Activated CD4-positive, alpha-beta T cell treated with anti-CD3 and anti-CD28 coated beads for 36 hours (primary cell): ENCODE measurements at regions of chr9 and their contacts with region 1.

Region 1: DNA sequence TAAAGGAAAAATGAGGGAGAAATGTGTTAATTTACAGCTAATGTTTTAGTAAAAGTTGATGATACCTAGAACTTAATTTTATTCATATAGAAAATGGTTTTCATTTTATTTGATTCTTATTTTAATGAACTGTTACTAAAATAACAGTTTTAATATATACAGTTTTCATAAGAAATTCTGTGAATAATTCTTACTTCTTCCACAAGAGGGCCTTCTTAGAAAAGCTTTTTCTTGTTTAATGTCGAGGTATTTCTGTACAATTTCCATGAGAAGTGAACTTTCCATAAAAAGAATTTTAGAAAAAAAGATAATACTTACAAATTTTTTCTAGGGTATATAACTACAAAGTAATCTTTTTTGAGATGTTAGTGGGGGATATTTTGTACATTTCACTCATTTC is 73.9 kb downstream of the KLF9 start:
- DNase-seq: no peak
- ATAC-seq: no peak
- H3K4me3 Mint-ChIP-seq: no peak overlapping the region
- H3K27ac Mint-ChIP-seq: no peak overlapping the region
- H3K4me1 Mint-ChIP-seq: no peaks in the 10 kb centered on the region
- H3K27me3 Mint-ChIP-seq: no peaks in the 10 kb centered on the region

Region 2: GRCh38 chr9:70100362-70100761 is 240.2 kb before region 1 on chr9:
- CTCF ChIA-PET with region 1: no interaction called
- POLR2A ChIA-PET with region 1: no interaction called
- intact Hi-C with region 1: no loop called
- DNase-seq: no peak
- ATAC-seq: no peak
- H3K4me3 Mint-ChIP-seq: no peak overlapping the region
- H3K27ac Mint-ChIP-seq: no peak overlapping the region
- H3K4me1 Mint-ChIP-seq: no peaks in the 10 kb centered on the region
- H3K27me3 Mint-ChIP-seq: peaks cover 7% of the 10 kb centered on the region

Region 3: DNA sequence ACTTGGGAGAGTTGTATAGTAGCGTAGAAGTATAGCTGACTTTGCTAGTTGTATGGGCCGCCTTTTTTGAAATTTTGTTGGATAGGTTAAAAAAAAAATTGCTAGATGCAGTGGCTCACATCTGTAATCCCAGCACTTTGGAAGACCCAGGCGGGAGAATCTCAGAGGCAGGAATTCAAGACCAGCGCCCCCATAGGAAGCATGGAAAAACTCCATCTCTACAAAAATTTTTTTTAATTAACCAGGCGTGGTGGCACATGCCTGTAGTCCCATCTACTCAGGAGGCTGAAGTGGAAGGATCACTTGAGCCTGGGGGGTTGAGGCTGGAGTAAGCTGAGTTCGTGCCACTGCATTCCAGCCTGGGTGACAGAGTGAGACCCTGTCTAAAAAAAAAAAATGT is 22.6 kb before region 1 on chr9:
- CTCF ChIA-PET with region 1: interaction called, 10 read pairs
- POLR2A ChIA-PET with region 1: no interaction called
- intact Hi-C with region 1: no loop called
- DNase-seq: no peak
- ATAC-seq: no peak
- H3K4me3 Mint-ChIP-seq: no peak overlapping the region
- H3K27ac Mint-ChIP-seq: no peak overlapping the region
- H3K4me1 Mint-ChIP-seq: peaks cover 3% of the 10 kb centered on the region
- H3K27me3 Mint-ChIP-seq: no peaks in the 10 kb centered on the region

Region 4: DNA sequence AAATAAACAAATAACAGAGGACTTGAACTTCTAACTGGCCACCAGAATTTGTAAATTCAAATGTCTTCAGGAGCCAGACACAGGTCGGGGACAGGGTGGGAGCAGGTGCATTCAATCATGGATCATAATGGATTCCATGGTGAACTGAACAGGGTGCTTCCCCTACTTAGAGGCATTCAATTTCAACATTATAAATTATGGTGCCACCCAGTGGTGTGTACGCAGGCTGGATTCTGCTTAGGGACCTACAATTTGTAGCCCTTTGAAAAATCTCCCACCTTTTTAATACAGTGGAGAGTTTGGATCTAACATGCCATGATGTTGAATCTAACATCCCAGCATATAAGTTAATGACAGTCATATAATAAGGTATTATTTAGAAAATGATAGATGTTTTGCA is 51.6 kb after region 1 on chr9:
- CTCF ChIA-PET with region 1: interaction called, 11 read pairs
- POLR2A ChIA-PET with region 1: no interaction called
- intact Hi-C with region 1: loop called in 1 of 2 experiments (anchors 5 kb)
- DNase-seq: peak; percentile 22
- ATAC-seq: no peak
- H3K4me3 Mint-ChIP-seq: no peak overlapping the region
- H3K27ac Mint-ChIP-seq: no peak overlapping the region
- H3K4me1 Mint-ChIP-seq: peaks cover 80% of the 10 kb centered on the region
- H3K27me3 Mint-ChIP-seq: no peaks in the 10 kb centered on the region

Region 5: DNA sequence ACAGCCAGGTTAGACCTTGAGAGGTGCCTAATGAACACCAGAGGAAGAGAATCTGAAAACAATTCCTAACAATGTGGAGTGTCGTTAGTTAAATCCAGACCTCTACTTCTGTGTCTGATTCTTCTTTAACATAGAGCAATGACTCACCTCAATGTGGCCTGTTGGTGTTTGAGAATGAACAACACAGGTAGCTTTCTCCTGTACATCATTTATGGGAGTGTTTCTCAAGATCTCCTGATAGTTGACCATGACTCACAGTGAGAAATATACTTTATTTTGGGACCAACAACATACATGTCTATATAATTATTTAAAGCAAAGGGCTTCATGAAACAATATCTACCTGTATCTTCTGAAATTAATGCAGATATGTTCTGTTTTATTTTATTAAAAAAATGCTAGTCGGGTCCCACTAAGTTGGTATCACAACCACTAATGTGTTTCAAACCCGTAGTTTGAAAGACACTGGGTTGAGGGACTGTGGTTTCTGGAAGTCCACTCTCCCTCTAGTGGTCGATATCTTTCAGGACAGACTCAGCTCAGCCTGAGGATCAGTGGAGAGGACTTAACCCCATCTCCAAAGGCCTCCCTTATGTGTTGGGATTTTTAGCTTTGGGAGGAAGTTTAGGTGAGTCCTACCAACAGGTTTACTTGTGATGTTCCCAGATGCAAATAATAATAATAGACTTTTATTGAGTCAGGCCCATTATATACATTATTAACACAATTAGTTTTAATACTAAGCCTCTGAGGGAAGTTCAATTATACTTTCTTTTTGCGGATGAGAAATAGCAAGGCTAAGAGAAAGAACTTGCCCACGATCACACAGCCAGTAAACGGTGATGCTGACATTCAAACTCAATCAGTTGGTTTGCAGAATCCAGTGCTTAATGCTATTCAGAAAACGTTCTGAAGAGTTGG is 143.9 kb after region 1 on chr9:
- CTCF ChIA-PET with region 1: no interaction called
- POLR2A ChIA-PET with region 1: no interaction called
- intact Hi-C with region 1: loop called in 1 of 2 experiments (anchors 2 kb)
- DNase-seq: no peak
- ATAC-seq: peak; percentile 63
- H3K4me3 Mint-ChIP-seq: no peak overlapping the region
- H3K27ac Mint-ChIP-seq: no peak overlapping the region
- H3K4me1 Mint-ChIP-seq: peaks cover 9% of the 10 kb centered on the region
- H3K27me3 Mint-ChIP-seq: no peaks in the 10 kb centered on the region

Region 6: GRCh38 chr9:70490478-70490877 is 149.9 kb after region 1 on chr9:
- CTCF ChIA-PET with region 1: interaction called, 4 read pairs
- POLR2A ChIA-PET with region 1: no interaction called
- intact Hi-C with region 1: loop called (anchors 2 kb)
- DNase-seq: no peak
- ATAC-seq: peak; percentile 73
- H3K4me3 Mint-ChIP-seq: no peak overlapping the region
- H3K27ac Mint-ChIP-seq: no peak overlapping the region
- H3K4me1 Mint-ChIP-seq: peaks cover 14% of the 10 kb centered on the region
- H3K27me3 Mint-ChIP-seq: peaks cover 7% of the 10 kb centered on the region

Region 7: GRCh38 chr9:70701163-70701562 is 360.6 kb after region 1 on chr9:
- CTCF ChIA-PET with region 1: no interaction called
- POLR2A ChIA-PET with region 1: no interaction called
- intact Hi-C with region 1: no loop called
- DNase-seq: no peak
- ATAC-seq: no peak
- H3K4me3 Mint-ChIP-seq: no peak overlapping the region
- H3K27ac Mint-ChIP-seq: no peak overlapping the region
- H3K4me1 Mint-ChIP-seq: no peaks in the 10 kb centered on the region
- H3K27me3 Mint-ChIP-seq: no peaks in the 10 kb centered on the region

Region 8: DNA sequence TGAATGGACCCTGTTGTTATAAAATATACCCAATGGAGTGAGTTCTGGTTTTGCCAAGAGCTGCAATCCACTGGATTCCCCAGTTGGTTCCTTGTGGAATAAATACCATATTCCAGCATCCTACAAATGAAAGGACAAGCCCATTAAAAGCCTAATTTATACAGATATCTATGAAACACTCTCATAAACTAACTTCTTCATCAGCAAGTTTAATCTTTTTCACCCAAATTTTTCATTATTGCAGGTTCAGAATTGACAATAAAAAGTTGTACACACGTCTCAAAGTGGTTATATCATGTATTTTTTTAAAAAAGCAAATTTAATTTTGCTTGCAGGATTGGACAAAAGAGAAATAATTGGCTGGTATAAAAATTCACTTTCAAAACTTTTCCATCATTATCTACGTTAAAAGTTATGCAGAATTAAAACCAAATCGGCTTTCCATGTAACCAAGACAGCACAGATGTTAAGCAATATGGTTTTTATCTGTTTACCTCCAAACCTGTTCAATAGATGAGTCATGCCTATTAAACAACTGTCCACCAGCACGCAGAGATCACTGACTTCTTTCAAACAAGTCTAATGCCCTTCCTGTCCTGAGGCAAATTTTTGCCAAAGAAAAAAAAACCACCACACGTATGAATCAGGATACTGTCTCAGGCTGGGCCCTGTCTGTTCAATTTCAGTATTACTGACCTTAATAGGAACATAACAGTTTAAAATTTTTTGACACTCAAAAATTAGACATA is 1385.2 kb after region 1 on chr9:
- CTCF ChIA-PET with region 1: no interaction called
- POLR2A ChIA-PET with region 1: no interaction called
- intact Hi-C with region 1: loop called in 1 of 2 experiments (anchors 10 kb)
- DNase-seq: no peak
- ATAC-seq: no peak
- H3K4me3 Mint-ChIP-seq: no peak overlapping the region
- H3K27ac Mint-ChIP-seq: no peak overlapping the region
- H3K4me1 Mint-ChIP-seq: peaks cover 9% of the 10 kb centered on the region
- H3K27me3 Mint-ChIP-seq: no peaks in the 10 kb centered on the region